Naive thymus-derived CD4-positive, alpha-beta T cell (primary cell): ENCODE measurements at regions of chr3 and their contacts with region 1.

Region 1: GRCh38 chr3:68256635-68257223 is 602.3 kb upstream of the SUCLG2 start:
- DNase-seq: peak in 6 of 9 donors; percentile 13 to 31 (median 22)
- ATAC-seq: no peak
- H3K4me3 ChIP-seq: no peak overlapping the region
- H3K4me3 Mint-ChIP-seq: no peak overlapping the region
- H3K27ac ChIP-seq: no peak overlapping the region
- H3K27ac Mint-ChIP-seq: peak overlapping the region in 1 of 9 donors; percentile 29
- H3K4me1 ChIP-seq: peaks cover 0 to 3% of the 10 kb centered on the region in 2 donors
- H3K4me1 Mint-ChIP-seq: peaks cover 0 to 8% (median 4%) of the 10 kb centered on the region in 7 donors
- H3K27me3 ChIP-seq: no peaks in the 10 kb centered on the region
- H3K27me3 Mint-ChIP-seq: no peaks in the 10 kb centered on the region

Region 2: DNA sequence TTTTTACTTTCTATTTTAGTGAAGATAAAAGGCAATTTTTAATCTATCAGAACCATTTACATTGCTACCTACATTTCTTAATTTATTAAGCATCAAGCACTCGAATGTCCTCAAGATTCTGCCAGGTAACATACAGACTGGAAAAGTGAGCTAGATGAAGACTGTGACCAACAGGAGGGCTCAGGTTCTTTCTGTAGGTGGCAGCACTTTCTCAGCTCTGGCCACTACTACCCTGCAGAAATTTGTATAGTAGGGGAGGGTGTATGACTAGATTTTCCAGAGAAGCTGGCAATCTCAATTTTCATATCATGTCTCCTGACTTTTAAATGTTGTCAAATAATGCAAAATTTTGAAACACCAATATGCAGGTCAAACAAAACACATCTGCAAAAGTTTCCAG is 437.3 kb before region 1 on chr3:
- CTCF ChIA-PET with region 1: interaction called, 6 read pairs
- POLR2A ChIA-PET with region 1: no interaction called
- intact Hi-C with region 1: loop called in 1 of 2 experiments (anchors 1 kb)
- DNase-seq: peak in 5 of 9 donors; percentile 10 to 27 (median 21)
- ATAC-seq: no peak
- H3K4me3 ChIP-seq: no peak overlapping the region
- H3K4me3 Mint-ChIP-seq: no peak overlapping the region
- H3K27ac ChIP-seq: no peak overlapping the region
- H3K27ac Mint-ChIP-seq: peak overlapping the region in 1 of 9 donors; percentile 3
- H3K4me1 ChIP-seq: no peaks in the 10 kb centered on the region
- H3K4me1 Mint-ChIP-seq: peaks cover 0 to 10% (median 0%) of the 10 kb centered on the region in 7 donors
- H3K27me3 ChIP-seq: no peaks in the 10 kb centered on the region
- H3K27me3 Mint-ChIP-seq: no peaks in the 10 kb centered on the region

Region 3: GRCh38 chr3:67901681-67902080 is 355.0 kb before region 1 on chr3:
- CTCF ChIA-PET with region 1: no interaction called
- POLR2A ChIA-PET with region 1: no interaction called
- intact Hi-C with region 1: loop called in 1 of 2 experiments (anchors 1 kb)
- DNase-seq: peak in 5 of 9 donors; percentile 17 to 31 (median 24)
- ATAC-seq: peak; percentile 31
- H3K4me3 ChIP-seq: no peak overlapping the region
- H3K4me3 Mint-ChIP-seq: no peak overlapping the region
- H3K27ac ChIP-seq: no peak overlapping the region
- H3K27ac Mint-ChIP-seq: no peak overlapping the region
- H3K4me1 ChIP-seq: peaks cover 0 to under 1% of the 10 kb centered on the region in 2 donors
- H3K4me1 Mint-ChIP-seq: peaks cover 0 to 19% (median 13%) of the 10 kb centered on the region in 7 donors
- H3K27me3 ChIP-seq: no peaks in the 10 kb centered on the region
- H3K27me3 Mint-ChIP-seq: no peaks in the 10 kb centered on the region

Region 4: GRCh38 chr3:67940210-67940952 is 316.3 kb before region 1 on chr3:
- CTCF ChIA-PET with region 1: no interaction called
- POLR2A ChIA-PET with region 1: no interaction called
- intact Hi-C with region 1: loop called in 1 of 2 experiments (anchors 2 kb)
- DNase-seq: no peak
- ATAC-seq: no peak
- H3K4me3 ChIP-seq: no peak overlapping the region
- H3K4me3 Mint-ChIP-seq: peak overlapping the region in 3 of 10 donors; percentile 49 to 63 (median 60)
- H3K27ac ChIP-seq: no peak overlapping the region
- H3K27ac Mint-ChIP-seq: peak overlapping the region in 8 of 9 donors; percentile 1 to 93 (median 85)
- H3K4me1 ChIP-seq: peaks cover 0 to 17% of the 10 kb centered on the region in 2 donors
- H3K4me1 Mint-ChIP-seq: peaks cover 0 to 29% (median 28%) of the 10 kb centered on the region in 7 donors
- H3K27me3 ChIP-seq: no peaks in the 10 kb centered on the region
- H3K27me3 Mint-ChIP-seq: no peaks in the 10 kb centered on the region

Region 5: GRCh38 chr3:67947808-67948508 is 308.8 kb before region 1 on chr3:
- CTCF ChIA-PET with region 1: no interaction called
- POLR2A ChIA-PET with region 1: no interaction called
- intact Hi-C with region 1: loop called in 1 of 2 experiments (anchors 2 kb)
- DNase-seq: peak in 8 of 9 donors; percentile 25 to 92 (median 84)
- ATAC-seq: peak; percentile 97
- H3K4me3 ChIP-seq: peak overlapping the region; percentile 40
- H3K4me3 Mint-ChIP-seq: peak overlapping the region; percentile 76 to 92 (median 83)
- H3K27ac ChIP-seq: peak overlapping the region; percentile 38
- H3K27ac Mint-ChIP-seq: peak overlapping the region; percentile 76 to 97 (median 91)
- H3K4me1 ChIP-seq: peaks cover 6 to 26% of the 10 kb centered on the region in 2 donors
- H3K4me1 Mint-ChIP-seq: peaks cover 11 to 54% (median 39%) of the 10 kb centered on the region in 7 donors
- H3K27me3 ChIP-seq: no peaks in the 10 kb centered on the region
- H3K27me3 Mint-ChIP-seq: no peaks in the 10 kb centered on the region

Region 6: DNA sequence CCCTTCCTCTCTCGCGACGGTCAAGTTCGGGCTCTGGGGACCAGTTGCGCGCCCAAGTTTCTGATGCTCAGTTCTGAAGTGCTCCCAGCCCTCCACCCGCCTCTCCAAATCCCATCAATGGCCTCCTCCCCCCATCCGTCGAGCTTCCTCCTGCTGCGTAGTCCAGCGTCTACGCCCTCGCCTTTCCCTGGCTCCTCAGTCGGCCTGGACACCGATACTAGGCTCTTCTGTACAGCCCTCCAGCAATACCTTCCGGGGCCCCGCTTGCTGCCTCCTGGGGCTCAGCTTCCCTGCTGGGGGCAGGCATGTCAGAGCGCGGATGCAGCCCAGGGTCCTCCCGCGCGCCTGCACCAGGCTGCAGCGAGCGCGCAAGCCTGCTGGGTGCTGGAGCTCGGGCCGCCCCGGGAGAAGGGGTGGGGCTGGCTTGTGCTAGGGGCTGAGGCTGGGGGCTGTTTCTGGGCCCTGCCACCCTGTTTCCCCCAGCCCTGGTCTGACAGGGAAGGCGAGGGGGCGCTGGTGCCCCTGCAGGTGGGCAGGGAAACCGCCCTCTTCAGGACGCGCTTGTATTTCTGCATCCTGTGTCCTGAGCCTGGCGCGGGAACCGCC is 249.0 kb before region 1 on chr3:
- CTCF ChIA-PET with region 1: no interaction called
- POLR2A ChIA-PET with region 1: no interaction called
- intact Hi-C with region 1: loop called in 1 of 2 experiments (anchors 1 kb)
- DNase-seq: peak; percentile 21 to 59 (median 45)
- ATAC-seq: peak; percentile 81
- H3K4me3 ChIP-seq: peak overlapping the region; percentile 62
- H3K4me3 Mint-ChIP-seq: peak overlapping the region; percentile 70 to 98 (median 88)
- H3K27ac ChIP-seq: no peak overlapping the region
- H3K27ac Mint-ChIP-seq: peak overlapping the region in 7 of 9 donors; percentile 45 to 87 (median 73)
- H3K4me1 ChIP-seq: peaks cover 0 to 10% of the 10 kb centered on the region in 2 donors
- H3K4me1 Mint-ChIP-seq: peaks cover 5 to 37% (median 27%) of the 10 kb centered on the region in 7 donors
- H3K27me3 ChIP-seq: no peaks in the 10 kb centered on the region
- H3K27me3 Mint-ChIP-seq: peaks cover 0 to 55% (median 17%) of the 10 kb centered on the region in 5 donors

Region 7: DNA sequence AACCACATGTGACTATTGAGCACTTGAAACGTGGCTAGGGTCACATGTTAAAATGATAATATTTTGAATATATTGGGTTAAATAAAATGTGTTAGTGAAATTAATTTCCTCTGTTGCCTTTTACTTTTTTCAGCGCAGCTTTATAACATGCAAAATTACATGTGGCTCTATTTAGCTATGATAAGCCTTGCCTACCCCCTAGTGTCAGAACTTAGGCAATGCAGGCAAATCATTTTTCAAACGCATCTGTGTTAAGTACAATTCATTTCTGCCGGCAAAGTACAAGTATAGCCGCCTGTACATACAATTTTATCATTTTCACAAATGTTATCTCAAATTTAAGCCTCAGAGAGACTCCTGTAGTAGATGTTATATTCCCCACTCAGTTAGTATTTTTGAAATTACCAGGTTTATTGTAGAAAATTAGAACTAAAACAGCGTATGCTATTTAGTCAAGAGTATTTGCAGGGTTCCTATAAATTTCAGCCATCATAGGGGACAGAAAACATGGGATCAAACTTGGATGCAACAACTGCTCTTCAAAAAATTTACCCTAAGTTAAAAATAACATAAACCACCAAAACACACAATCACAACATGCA is 619.5 kb after region 1 on chr3:
- CTCF ChIA-PET with region 1: no interaction called
- POLR2A ChIA-PET with region 1: no interaction called
- intact Hi-C with region 1: loop called in 1 of 2 experiments (anchors 5 kb)
- DNase-seq: peak in 7 of 9 donors; percentile 30 to 63 (median 51)
- ATAC-seq: peak; percentile 69
- H3K4me3 ChIP-seq: no peak overlapping the region
- H3K4me3 Mint-ChIP-seq: no peak overlapping the region
- H3K27ac ChIP-seq: no peak overlapping the region
- H3K27ac Mint-ChIP-seq: no peak overlapping the region
- H3K4me1 ChIP-seq: no peaks in the 10 kb centered on the region
- H3K4me1 Mint-ChIP-seq: no peaks in the 10 kb centered on the region
- H3K27me3 ChIP-seq: no peaks in the 10 kb centered on the region
- H3K27me3 Mint-ChIP-seq: peaks cover 5 to 28% (median 25%) of the 10 kb centered on the region in 5 donors